ENCODE measurements at regions of chr9 and their contacts with region 1.

Region 1: DNA sequence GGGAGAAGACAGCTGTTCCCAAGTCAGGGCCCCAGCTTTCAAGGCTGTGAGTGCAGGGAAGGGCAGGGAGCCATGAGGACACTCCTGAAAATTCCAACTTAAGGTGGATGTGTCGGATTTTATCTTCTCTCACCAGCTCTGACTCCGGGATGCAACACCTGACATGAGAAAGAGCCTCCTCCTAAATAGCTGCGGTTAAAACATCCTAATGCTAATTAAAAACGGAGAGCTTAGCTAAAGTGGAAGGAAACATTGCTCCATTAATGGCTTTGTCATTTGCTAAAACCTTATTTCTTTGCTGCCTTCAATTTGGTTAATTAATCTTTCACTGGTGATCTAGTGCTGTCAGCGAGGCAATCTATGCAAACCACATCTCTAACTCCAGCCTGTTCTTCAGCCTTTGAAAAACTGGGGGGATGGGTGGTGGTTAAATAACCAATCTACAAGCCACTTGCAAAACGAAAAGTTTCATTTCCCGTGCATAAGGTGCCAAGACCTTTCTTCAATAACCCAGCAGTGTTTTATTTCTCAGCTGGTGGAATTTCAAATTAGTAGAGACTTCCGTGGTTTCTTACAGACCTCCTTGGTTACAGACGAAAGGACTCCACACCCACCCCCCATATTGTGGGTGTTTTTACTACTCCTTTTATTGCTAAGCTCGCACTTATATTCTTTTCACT is 379.6 kb downstream of the MLLT3 start:
- DNase-seq: no peak
- H3K4me3 ChIP-seq: no peak overlapping the region
- H3K27ac ChIP-seq: no peak overlapping the region
- H3K4me1 ChIP-seq: no peaks in the 10 kb centered on the region
- H3K27me3 ChIP-seq: no peaks in the 10 kb centered on the region
- CTCF ChIP-seq: no peak
- POLR2A ChIP-seq: no peak

Region 2: DNA sequence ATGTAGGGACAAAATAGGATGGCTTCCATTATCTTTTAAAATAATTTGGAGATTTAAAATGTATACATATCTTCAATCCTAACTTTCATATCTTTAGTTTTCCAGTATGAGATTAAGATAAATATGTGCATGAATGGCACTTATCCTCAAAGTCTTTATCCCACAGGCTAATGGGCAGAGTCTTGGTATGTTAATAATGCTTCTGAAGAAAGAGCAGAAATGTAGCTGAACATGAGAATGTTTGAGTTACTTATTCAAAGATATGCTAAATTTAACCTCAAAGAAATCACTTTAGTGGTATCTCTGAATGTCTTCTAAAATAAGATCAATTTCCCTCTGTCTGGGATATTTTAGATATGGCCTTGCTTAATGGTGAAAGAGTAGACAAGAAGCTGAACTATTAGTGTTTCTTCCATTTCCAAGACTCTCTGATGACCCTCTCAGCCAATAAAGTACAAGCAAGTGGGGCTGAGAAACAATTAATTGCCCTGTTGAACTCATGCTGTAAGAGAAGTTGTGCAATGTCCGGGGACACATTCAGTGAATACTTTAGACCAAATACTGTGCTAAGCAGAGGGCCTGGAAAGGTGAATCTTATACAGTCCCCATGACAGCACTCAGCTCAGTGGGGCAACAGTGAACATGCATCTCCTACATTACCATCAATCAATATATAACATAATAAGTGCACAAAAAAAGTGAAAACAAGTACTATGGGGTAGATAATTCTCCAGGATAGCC is 1818.7 kb before region 1 on chr9:
- intact Hi-C with region 1: loop called (anchors 5 kb)
- DNase-seq: no peak
- H3K4me3 ChIP-seq: no peak overlapping the region
- H3K27ac ChIP-seq: no peak overlapping the region
- H3K4me1 ChIP-seq: no peaks in the 10 kb centered on the region
- H3K27me3 ChIP-seq: no peaks in the 10 kb centered on the region
- CTCF ChIP-seq: no peak
- POLR2A ChIP-seq: no peak

Region 3: DNA sequence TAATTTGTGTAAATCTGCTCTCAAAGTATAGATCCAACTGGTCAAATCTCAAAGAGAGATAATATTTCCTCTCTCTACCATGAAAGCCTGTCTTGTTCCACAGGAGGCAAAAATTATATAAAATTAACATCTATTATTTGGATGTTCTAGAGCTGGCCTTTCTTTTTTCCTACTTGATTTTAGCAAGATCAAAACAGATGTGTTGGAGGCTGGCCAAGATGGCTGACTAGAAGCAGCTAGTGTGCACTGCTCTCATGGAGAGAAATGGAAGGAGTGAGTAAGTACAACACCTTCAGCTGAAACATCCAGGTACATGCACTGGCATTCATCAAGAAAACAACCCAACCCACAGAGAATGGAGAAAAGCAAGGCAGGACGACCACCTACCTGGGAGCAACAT is 155.2 kb before region 1 on chr9:
- intact Hi-C with region 1: loop called (anchors 5 kb)
- DNase-seq: no peak
- H3K4me3 ChIP-seq: no peak overlapping the region
- H3K27ac ChIP-seq: no peak overlapping the region
- H3K4me1 ChIP-seq: no peaks in the 10 kb centered on the region
- H3K27me3 ChIP-seq: no peaks in the 10 kb centered on the region
- CTCF ChIP-seq: no peak
- POLR2A ChIP-seq: no peak

Measured in vagina (tissue), 2 donors.